ENCODE measurements at regions of chr13 and their contacts with region 1.

Region 1: DNA sequence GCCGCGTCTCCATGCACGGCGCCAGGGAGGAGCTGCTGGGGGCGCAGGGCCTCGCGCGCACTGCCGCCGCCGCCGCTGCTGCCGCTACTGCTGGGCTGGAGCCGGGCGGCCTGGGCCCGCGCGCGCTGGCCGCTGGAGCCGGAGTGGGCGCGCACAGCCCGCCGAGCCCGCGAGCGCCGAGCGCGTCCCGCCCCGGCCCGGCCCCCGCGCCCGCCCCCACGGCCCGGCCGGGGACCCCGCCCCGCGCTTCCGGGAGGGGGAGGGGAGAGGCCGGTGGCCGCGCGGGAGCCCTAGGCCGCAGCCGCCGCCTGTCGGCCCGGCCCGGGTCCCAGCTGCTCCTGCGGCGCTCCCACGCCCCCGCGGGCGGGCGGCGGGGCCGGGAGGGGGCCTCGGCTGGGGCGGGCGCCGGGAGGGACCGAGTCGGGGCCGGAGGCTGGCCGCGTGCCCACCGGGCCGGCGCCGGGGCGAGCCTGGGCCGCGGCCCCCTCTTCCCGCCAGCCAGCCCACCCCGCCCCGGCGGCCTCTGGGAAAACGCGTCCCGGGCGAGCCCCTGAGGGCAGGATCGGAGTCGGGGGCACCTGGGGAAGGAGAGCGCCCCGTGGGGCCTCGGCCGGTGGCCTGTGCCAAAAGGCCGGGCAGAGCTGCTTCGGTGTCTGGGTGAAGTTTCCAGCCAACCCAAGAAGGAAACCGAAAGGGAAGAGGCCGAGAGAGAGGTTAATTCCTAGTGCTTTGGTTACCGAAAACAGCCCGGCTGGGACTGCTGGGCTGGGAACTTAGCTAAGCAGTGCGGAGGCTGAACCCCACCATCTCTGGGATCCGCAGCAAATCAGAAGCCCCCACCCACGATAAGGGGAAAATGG is at the start of gene STK24:
- DNase-seq: peak; percentile 74 to 81
- ATAC-seq: peak; percentile 84 to 94 (median 87)
- H3K4me3 ChIP-seq: peak within 1 kb of the TSS; percentile 50
- H3K4me3 Mint-ChIP-seq: peak within 1 kb of the TSS; percentile 89
- H3K27ac ChIP-seq: peak within 1 kb of the TSS; percentile 80
- H3K27ac Mint-ChIP-seq: peak within 1 kb of the TSS; percentile 79 to 85
- H3K4me1 ChIP-seq: peaks cover 17% of the 10 kb centered on the region
- H3K4me1 Mint-ChIP-seq: peaks cover 39 to 40% of the 10 kb centered on the region in 2 donors
- H3K27me3 ChIP-seq: no peaks in the 10 kb centered on the region
- H3K27me3 Mint-ChIP-seq: no peaks in the 10 kb centered on the region
- CTCF ChIP-seq: no peak
- total RNA-seq, gene STK24: 64.5 to 78.4 (median 70.4) TPM

Region 2: DNA sequence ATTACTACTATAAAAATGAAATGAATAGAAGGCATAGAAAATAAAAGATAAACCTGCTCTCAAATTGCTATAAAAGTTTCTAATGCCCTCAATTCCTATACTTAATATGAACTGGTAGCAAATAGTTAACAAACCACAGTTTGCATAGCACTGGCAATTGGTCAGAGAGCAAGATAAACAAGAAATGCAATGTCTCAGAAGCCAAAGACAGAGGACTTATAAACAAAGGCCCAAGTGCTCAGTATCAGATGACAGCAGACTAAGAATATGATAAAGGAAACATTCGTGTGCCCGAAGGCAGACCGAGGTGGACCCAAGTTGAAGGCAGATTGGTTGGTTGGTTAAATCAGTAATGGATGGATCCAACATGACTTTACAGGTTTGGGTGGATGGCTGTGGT is 573.1 kb before region 1 on chr13:
- intact Hi-C with region 1: no loop called
- DNase-seq: no peak
- ATAC-seq: no peak
- H3K4me3 ChIP-seq: no peak overlapping the region
- H3K4me3 Mint-ChIP-seq: no peak overlapping the region
- H3K27ac ChIP-seq: no peak overlapping the region
- H3K27ac Mint-ChIP-seq: no peak overlapping the region
- H3K4me1 ChIP-seq: no peaks in the 10 kb centered on the region
- H3K4me1 Mint-ChIP-seq: no peaks in the 10 kb centered on the region
- H3K27me3 ChIP-seq: no peaks in the 10 kb centered on the region
- H3K27me3 Mint-ChIP-seq: no peaks in the 10 kb centered on the region
- CTCF ChIP-seq: no peak

Region 3: DNA sequence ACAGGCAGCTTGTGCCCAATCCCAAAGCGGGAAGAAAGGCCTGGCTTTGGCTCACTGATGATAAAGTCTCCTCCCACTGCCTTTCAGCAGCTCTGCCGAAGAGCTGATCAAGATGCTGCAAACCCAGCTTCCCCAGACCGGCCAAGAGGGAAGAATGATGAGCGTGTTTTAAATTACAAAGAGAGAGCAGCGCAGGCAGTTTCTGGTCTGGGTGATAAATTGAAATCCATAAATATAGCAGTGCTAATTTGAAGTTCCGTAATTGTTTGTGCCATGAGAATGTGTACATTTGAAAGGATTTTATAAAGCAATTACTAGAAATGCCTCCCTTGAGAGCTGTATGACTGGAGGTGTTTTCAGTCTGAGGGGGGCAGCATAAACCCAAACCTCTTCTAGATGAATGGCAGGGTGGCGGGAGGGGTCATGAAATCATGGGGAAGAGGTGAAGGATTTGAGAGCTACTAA is 172.1 kb before region 1 on chr13:
- intact Hi-C with region 1: no loop called
- DNase-seq: no peak
- ATAC-seq: no peak
- H3K4me3 ChIP-seq: no peak overlapping the region
- H3K4me3 Mint-ChIP-seq: no peak overlapping the region
- H3K27ac ChIP-seq: no peak overlapping the region
- H3K27ac Mint-ChIP-seq: no peak overlapping the region
- H3K4me1 ChIP-seq: no peaks in the 10 kb centered on the region
- H3K4me1 Mint-ChIP-seq: no peaks in the 10 kb centered on the region
- H3K27me3 ChIP-seq: no peaks in the 10 kb centered on the region
- H3K27me3 Mint-ChIP-seq: peaks cover 6 to 10% of the 10 kb centered on the region in 2 donors
- CTCF ChIP-seq: no peak

Region 4: DNA sequence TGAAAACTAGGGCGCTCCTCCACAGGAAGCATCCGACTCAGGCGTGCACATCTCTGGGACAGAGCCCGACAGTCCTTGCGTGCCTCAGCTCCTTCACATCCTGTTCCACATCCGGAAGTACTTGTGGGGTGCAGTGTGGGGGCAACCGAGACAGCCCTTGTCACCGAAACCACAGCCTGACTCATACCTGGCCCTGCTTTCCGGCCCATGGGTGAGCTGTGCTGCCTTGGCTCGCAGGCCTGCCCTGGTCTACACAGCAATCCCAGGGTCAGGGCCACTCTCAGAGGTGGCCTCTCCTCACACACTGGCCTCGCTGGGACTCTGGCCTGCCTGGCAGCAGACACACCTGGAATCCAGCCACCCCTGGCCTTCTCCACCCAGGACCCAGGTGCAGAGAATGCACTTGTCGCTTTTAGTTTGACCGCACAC is 100.6 kb before region 1 on chr13:
- intact Hi-C with region 1: loop called (anchors 1 kb)
- DNase-seq: peak; percentile 58 to 95
- ATAC-seq: peak; percentile 90 to 94 (median 94)
- H3K4me3 ChIP-seq: no peak overlapping the region
- H3K4me3 Mint-ChIP-seq: peak overlapping the region; percentile 75
- H3K27ac ChIP-seq: peak overlapping the region; percentile 69
- H3K27ac Mint-ChIP-seq: peak overlapping the region; percentile 85 to 87
- H3K4me1 ChIP-seq: peaks cover 36% of the 10 kb centered on the region
- H3K4me1 Mint-ChIP-seq: peaks cover 56 to 59% of the 10 kb centered on the region in 2 donors
- H3K27me3 ChIP-seq: no peaks in the 10 kb centered on the region
- H3K27me3 Mint-ChIP-seq: no peaks in the 10 kb centered on the region
- CTCF ChIP-seq: no peak

Region 5: DNA sequence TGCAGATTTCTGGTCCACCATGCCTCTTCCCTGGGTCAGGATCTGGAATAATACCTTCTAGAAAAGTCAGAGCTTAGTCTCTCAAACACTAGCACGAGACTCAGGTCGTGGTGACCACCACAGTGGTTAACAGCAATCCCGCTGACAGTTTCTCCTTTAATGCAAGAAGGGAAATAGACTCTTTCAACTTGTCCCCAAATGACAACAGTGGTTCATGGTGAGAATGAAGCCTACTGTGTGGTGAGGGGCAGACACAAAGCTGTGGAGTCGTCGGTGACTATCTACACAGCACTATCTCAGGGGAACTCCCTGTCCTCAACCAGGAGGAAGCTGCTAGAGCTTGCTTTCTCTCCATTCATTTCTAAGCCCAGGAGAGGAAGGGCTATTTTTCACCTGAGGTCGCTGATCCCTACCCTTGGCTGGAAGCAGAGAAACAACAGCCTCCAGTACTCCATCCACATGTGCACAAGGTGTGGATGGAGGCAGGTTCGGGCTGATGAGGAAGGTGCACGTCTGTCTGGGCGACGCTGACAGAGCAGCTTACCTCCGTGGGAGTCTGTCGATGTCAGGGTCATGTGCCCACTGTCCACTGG is 72.7 kb before region 1 on chr13:
- intact Hi-C with region 1: loop called (anchors 5 kb)
- DNase-seq: peak; percentile 43 to 60
- ATAC-seq: peak; percentile 86 to 97 (median 87)
- H3K4me3 ChIP-seq: no peak overlapping the region
- H3K4me3 Mint-ChIP-seq: peak overlapping the region; percentile 62
- H3K27ac ChIP-seq: no peak overlapping the region
- H3K27ac Mint-ChIP-seq: peak overlapping the region; percentile 34 to 57
- H3K4me1 ChIP-seq: peaks cover 29% of the 10 kb centered on the region
- H3K4me1 Mint-ChIP-seq: peaks cover 52 to 88% of the 10 kb centered on the region in 2 donors
- H3K27me3 ChIP-seq: peaks cover 5% of the 10 kb centered on the region
- H3K27me3 Mint-ChIP-seq: peaks cover 24 to 48% of the 10 kb centered on the region in 2 donors
- CTCF ChIP-seq: no peak